HepG2 (cell line): ENCODE measurements at regions of chr16 and their contacts with region 1.

Region 1: GRCh38 chr16:48014349-48015135 is 141.3 kb downstream of the ABCC12 start:
- DNase-seq: peak; percentile 11
- ATAC-seq: no peak
- H3K4me3 ChIP-seq: no peak overlapping the region
- H3K27ac ChIP-seq: no peak overlapping the region
- H3K4me1 ChIP-seq: no peaks in the 10 kb centered on the region
- H3K27me3 ChIP-seq: peaks cover 0 to 5% of the 10 kb centered on the region in 2 experiments; a peak in 1 of 5 replicates
- CTCF ChIP-seq: no peak
- EP300 ChIP-seq: no peak
- POLR2A ChIP-seq: no peak
- RAD21 ChIP-seq: no peak

Region 2: GRCh38 chr16:48041861-48042480 is 27.4 kb after region 1 on chr16:
- CTCF ChIA-PET with region 1: no interaction called
- POLR2A ChIA-PET with region 1: no interaction called
- in situ Hi-C with region 1: no loop called
- intact Hi-C with region 1: loop called (anchors 1 kb)
- DNase-seq: peak; percentile 34
- ATAC-seq: peak; percentile 94
- H3K4me3 ChIP-seq: no peak overlapping the region
- H3K27ac ChIP-seq: no peak overlapping the region
- H3K4me1 ChIP-seq: peaks cover 6% of the 10 kb centered on the region; the same call in 1 of the 2 replicates
- H3K27me3 ChIP-seq: peaks cover 0 to 1% of the 10 kb centered on the region in 2 experiments; a peak in 2 of 5 replicates
- CTCF ChIP-seq: peak; percentile 60
- EP300 ChIP-seq: no peak
- POLR2A ChIP-seq: no peak
- RAD21 ChIP-seq: peak; percentile 61